ENCODE measurements at regions of chr6 and their contacts with region 1.

Region 1: DNA sequence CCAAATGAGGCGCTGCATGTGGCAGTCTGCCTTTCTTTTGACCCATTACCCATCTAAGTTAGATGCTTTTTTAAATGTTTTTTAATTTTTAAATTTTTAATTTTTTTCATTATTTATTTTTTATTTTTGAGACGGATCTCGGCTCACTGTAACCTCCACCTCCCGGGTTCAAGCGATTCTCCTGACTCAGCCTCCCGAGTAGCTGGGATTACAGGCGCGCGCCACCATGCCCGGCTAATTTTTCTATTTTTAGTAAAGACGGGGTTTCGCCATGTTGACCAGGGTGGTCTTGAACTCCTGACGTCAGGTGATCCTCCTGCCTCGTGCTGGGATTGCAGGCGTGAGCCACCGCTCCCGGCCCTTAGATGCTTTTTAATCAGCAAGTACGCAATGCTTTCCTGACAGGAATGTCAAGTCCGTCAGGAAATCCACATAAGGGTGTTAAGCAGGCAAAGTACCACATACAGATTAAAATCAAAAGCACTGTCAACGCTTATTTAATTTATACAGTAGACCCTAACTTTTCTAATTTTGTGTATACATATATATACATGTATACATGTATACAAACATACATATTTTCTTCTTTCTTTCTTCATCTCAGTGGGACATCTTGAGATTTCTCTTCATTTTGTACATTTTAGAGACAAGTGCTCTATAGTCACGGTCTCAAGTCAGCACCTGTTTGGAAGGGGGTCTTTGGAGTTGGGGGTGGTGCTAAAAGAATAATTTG is 995 bp upstream of the GSTA4 start:
- DNase-seq: peak; percentile 91
- ATAC-seq: no peak
- H3K4me3 ChIP-seq: peak overlapping the region; percentile 4; the same call in 1 of the 2 replicates
- H3K27ac ChIP-seq: no peak overlapping the region
- H3K4me1 ChIP-seq: peaks cover 3% of the 10 kb centered on the region; the same call in 1 of the 2 replicates
- H3K27me3 ChIP-seq: no peaks in the 10 kb centered on the region
- CTCF ChIP-seq: no peak
- POLR2A ChIP-seq: no peak
- RAD21 ChIP-seq: no peak

Region 2: DNA sequence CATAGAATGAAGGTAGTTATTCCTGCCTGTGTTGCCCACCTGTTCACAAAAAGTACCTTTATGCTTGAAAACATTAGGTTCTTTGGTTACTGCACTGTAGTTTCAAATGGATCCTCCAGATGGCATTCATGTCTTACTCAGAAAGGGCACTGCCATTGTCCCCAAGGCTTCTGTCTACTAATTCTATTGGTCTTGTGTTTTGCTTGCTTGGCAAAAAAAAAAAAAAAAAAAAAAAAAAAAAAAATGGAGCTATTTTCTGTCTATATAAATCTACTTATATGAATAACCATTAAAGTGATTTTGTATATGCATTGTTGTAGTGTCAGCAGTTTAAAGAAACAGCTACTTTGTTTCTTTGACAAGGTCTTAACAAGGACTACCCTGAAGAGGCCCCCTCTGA is 588.6 kb before region 1 on chr6:
- CTCF ChIA-PET with region 1: no interaction called
- POLR2A ChIA-PET with region 1: no interaction called
- dilution Hi-C with region 1: no loop called
- in situ Hi-C with region 1: loop called (anchors 5 kb)
- intact Hi-C with region 1: loop called (anchors 2 kb)
- DNase-seq: peak; percentile 61
- ATAC-seq: peak; percentile 52
- H3K4me3 ChIP-seq: no peak overlapping the region
- H3K27ac ChIP-seq: no peak overlapping the region
- H3K4me1 ChIP-seq: peaks cover 9% of the 10 kb centered on the region
- H3K27me3 ChIP-seq: no peaks in the 10 kb centered on the region
- CTCF ChIP-seq: peak; percentile 64
- POLR2A ChIP-seq: no peak
- RAD21 ChIP-seq: peak; percentile 74

Region 3: DNA sequence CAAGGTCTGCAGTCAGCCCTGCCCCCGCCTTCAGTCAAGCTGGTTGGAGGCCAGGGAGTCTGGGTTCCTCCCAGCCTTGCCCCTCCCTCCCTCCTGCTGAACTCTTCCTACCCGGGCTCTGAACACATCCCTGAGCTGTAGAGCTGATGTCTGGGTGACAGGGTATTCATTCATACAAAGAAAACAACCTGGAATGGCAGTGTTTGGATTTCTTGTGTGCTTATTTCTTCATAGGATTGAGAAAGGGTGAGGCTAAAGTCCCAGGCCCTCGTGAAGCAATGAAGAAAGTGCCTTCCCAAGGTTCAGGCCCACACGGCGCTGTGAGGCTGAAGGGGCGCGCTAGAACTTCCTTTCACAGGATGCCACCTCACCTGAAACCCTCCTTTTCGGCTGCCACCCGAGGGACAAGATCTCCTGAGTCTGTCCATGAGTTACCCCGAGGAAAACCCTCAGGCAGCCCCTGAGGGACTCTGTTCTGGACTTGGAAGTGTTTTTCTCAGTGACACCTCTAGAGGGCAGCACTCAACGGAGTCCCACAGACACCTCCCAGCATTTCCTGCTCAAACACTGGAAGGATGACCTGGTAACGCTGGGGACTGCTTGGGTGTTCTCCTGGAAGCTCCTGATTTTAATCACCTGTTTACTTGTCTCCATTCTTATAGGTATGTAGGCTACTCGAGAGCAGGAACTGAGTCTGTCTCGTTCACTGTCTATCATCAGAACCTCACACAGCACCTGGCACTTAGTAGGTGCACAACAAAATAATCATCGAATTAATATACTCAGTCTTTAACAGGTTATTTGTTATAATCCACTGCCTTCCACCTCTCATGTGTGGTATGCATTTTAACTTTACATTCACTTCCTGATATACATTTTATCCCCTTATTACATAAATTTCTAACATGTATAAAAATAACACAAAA is 180.6 kb before region 1 on chr6:
- CTCF ChIA-PET with region 1: no interaction called
- POLR2A ChIA-PET with region 1: no interaction called
- dilution Hi-C with region 1: no loop called
- in situ Hi-C with region 1: no loop called
- intact Hi-C with region 1: loop called (anchors 5 kb)
- DNase-seq: peak; percentile 50
- ATAC-seq: peak; percentile 96
- H3K4me3 ChIP-seq: no peak overlapping the region
- H3K27ac ChIP-seq: no peak overlapping the region
- H3K4me1 ChIP-seq: peaks cover 1% of the 10 kb centered on the region; the same call in 1 of the 2 replicates
- H3K27me3 ChIP-seq: peaks cover 8% of the 10 kb centered on the region; the same call in 1 of the 2 replicates
- CTCF ChIP-seq: peak; percentile 61
- POLR2A ChIP-seq: no peak
- RAD21 ChIP-seq: peak; percentile 53

Region 4: DNA sequence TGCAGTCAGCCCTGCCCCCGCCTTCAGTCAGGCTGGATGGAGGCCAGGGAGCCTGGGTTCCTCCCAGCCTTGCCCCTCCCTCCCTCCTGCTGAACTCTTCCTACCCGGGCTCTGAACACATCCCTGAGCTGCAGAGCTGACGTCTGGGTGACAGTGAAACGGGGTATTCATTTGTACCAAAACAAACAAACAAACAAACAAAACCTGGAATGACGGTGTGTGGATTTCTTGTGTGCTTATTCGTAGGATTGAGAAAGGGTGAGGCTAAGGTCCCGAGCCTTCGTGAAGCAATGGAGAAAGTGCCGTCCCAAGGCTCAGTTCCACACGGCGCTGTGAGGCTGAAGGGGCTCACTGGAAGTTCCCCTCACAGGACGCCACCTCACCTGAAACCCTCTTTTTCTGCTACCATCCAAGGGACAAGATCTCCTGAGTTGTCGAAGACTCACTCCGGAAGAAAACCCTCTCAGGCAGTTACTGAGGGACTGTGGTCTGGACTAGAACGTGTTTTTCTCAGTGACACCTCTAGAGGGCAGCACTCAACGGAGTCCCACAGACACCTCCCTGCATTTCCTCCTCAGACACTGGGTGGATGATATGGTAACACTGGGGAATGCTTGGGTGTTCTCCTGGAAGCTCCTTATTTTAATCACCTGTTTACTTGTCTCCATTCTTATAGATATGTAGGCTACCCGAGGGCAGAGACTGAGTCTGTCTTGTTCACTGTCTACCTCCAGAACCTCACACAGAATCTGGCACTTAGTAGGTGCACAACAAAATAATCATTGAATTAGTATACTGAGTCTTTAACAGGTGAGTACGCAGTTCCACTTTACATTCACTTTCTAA is 113.9 kb before region 1 on chr6:
- CTCF ChIA-PET with region 1: no interaction called
- POLR2A ChIA-PET with region 1: no interaction called
- dilution Hi-C with region 1: no loop called
- in situ Hi-C with region 1: no loop called
- intact Hi-C with region 1: loop called (anchors 1 kb)
- DNase-seq: peak; percentile 63
- ATAC-seq: peak; percentile 99
- H3K4me3 ChIP-seq: peak overlapping the region; percentile 49
- H3K27ac ChIP-seq: peak overlapping the region; percentile 68
- H3K4me1 ChIP-seq: peaks cover 5% of the 10 kb centered on the region
- H3K27me3 ChIP-seq: no peaks in the 10 kb centered on the region
- CTCF ChIP-seq: peak; percentile 69
- POLR2A ChIP-seq: no peak
- RAD21 ChIP-seq: peak; percentile 66

Region 5: DNA sequence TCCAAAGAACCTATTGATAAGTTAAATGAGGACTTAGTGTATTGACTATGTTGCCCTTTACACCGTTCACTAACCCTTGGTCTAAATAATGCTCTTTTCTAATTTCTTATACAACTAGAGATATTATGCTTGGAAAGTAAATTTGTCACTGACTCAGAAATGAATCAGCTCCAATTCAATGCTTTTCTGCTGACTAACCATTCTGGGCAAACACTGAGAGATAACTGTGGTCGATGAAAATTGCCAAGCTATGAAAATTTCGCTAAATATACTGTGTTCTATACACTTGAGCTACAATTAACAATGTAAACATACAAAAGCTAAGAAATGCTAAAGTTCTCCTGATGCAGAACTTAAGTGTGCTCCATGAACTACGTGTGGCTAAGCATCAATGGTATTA is 46.0 kb after region 1 on chr6:
- CTCF ChIA-PET with region 1: interaction called, 6 read pairs
- POLR2A ChIA-PET with region 1: no interaction called
- dilution Hi-C with region 1: no loop called
- in situ Hi-C with region 1: no loop called
- intact Hi-C with region 1: loop called (anchors 1 kb)
- DNase-seq: peak; percentile 95
- ATAC-seq: peak; percentile 70
- H3K4me3 ChIP-seq: no peak overlapping the region
- H3K27ac ChIP-seq: peak overlapping the region; percentile 54; the same call in 1 of the 2 replicates
- H3K4me1 ChIP-seq: peaks cover 19% of the 10 kb centered on the region
- H3K27me3 ChIP-seq: no peaks in the 10 kb centered on the region
- CTCF ChIP-seq: no peak
- POLR2A ChIP-seq: no peak
- RAD21 ChIP-seq: no peak

Region 6: GRCh38 chr6:53199156-53199555 is 203.1 kb after region 1 on chr6:
- CTCF ChIA-PET with region 1: no interaction called
- POLR2A ChIA-PET with region 1: no interaction called
- dilution Hi-C with region 1: no loop called
- in situ Hi-C with region 1: no loop called
- intact Hi-C with region 1: no loop called
- DNase-seq: no peak
- ATAC-seq: no peak
- H3K4me3 ChIP-seq: no peak overlapping the region
- H3K27ac ChIP-seq: no peak overlapping the region
- H3K4me1 ChIP-seq: no peaks in the 10 kb centered on the region
- H3K27me3 ChIP-seq: peaks cover 7% of the 10 kb centered on the region
- CTCF ChIP-seq: no peak
- POLR2A ChIP-seq: no peak
- RAD21 ChIP-seq: no peak

Region 7: DNA sequence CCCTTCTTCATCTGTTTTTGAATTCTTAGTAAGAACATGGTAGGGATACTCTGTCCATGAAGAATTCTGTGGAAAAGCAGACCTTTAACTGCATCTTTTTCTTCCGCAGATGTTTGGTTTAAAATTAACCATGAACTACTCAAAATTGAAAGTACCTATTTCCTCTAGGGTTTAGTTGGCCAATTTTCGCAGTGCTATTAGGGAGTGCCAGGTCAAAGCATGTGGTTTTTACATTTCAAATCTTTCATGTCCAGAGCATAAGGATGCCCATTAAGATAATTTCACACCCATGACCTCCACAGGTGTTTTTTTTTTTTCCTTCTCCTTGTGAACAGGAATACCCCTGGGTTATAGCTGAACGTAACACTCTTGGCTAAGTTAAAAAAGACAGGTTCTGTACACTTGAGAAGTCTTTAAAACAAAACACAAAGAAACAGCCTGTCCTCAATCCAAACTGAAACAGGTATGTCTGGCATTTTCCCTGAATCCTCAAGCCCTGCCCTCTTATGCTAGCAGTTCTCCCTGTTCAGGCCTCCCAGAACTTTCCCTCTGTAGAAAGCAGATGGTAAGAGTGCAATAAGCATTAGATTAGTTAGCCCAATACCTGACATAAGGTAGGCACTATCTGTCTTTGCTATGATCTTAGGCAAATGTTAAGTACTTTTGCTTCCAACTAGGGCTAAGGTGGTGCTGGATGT is 285.6 kb after region 1 on chr6:
- CTCF ChIA-PET with region 1: no interaction called
- POLR2A ChIA-PET with region 1: no interaction called
- dilution Hi-C with region 1: no loop called
- in situ Hi-C with region 1: no loop called
- intact Hi-C with region 1: no loop called
- DNase-seq: no peak
- ATAC-seq: no peak
- H3K4me3 ChIP-seq: no peak overlapping the region
- H3K27ac ChIP-seq: no peak overlapping the region
- H3K4me1 ChIP-seq: no peaks in the 10 kb centered on the region; the same call in 1 of the 2 replicates
- H3K27me3 ChIP-seq: no peaks in the 10 kb centered on the region
- CTCF ChIP-seq: no peak
- POLR2A ChIP-seq: no peak
- RAD21 ChIP-seq: no peak